A673 (cell line): ENCODE measurements at regions of chr11 and their contacts with region 1.

Region 1: DNA sequence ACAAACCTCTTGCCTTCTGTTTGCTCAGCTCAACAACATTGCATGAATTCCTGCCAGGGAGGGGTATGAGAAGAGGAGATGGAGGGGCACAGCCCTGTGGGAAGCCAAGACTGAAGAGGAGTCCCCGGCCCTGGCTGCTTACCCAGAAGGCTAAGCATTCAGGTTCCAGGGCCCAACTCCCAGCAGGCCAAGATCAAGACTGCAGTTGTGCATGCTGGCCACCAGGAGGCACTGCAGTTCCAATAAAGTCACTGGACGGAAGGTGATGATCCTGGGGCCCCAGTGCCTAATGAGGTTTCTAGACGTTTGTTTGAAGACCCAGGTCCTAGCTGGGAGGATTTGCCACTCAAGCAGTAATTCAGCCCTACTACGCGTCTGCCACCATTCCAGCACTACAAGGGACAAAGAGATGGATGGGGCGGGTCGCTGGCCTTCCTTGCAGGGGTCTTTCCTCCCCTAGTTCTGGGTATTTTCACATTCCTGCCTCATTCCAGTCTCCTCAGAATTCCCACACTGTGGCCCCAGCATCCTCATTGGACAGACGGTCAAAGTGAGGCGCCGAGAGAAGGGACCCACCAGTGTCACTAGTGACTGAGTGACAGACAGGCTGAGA is 23.6 kb downstream of the ALX4 start:
- DNase-seq: peak; percentile 91
- H3K4me3 ChIP-seq: no peak overlapping the region
- H3K27ac ChIP-seq: peak overlapping the region; percentile 53
- H3K4me1 ChIP-seq: peaks cover 51% of the 10 kb centered on the region
- H3K27me3 ChIP-seq: no peaks in the 10 kb centered on the region
- CTCF ChIP-seq: peak; percentile 100

Region 2: GRCh38 chr11:44388828-44389657 is 102.7 kb after region 1 on chr11:
- CTCF ChIA-PET with region 1: no interaction called
- POLR2A ChIA-PET with region 1: no interaction called
- intact Hi-C with region 1: loop called (anchors 5 kb)
- DNase-seq: no peak
- H3K4me3 ChIP-seq: peak overlapping the region; percentile 15
- H3K27ac ChIP-seq: no peak overlapping the region
- H3K4me1 ChIP-seq: peaks cover 4% of the 10 kb centered on the region
- H3K27me3 ChIP-seq: no peaks in the 10 kb centered on the region
- CTCF ChIP-seq: 0 out of 2 replicates have a peak, but pooled peaks have one; percentile 17

Region 3: GRCh38 chr11:44483919-44484610 is 197.7 kb after region 1 on chr11:
- CTCF ChIA-PET with region 1: no interaction called
- POLR2A ChIA-PET with region 1: no interaction called
- intact Hi-C with region 1: loop called (anchors 2 kb)
- DNase-seq: peak; percentile 79
- H3K4me3 ChIP-seq: no peak overlapping the region
- H3K27ac ChIP-seq: no peak overlapping the region
- H3K4me1 ChIP-seq: no peaks in the 10 kb centered on the region
- H3K27me3 ChIP-seq: no peaks in the 10 kb centered on the region
- CTCF ChIP-seq: peak; percentile 84